Mammary epithelial cell (primary cell): ENCODE measurements at regions of chr5 and their contacts with region 1.

Region 1: GRCh38 chr5:137320056-137321045 is 178.8 kb downstream of the SPOCK1 start:
- DNase-seq: peak; percentile 66
- H3K4me3 ChIP-seq: no peak overlapping the region
- H3K27ac ChIP-seq: no peak overlapping the region
- H3K4me1 ChIP-seq: peaks cover 6% of the 10 kb centered on the region
- H3K27me3 ChIP-seq: no peaks in the 10 kb centered on the region
- CTCF ChIP-seq: peak; percentile 84 to 85

Region 2: DNA sequence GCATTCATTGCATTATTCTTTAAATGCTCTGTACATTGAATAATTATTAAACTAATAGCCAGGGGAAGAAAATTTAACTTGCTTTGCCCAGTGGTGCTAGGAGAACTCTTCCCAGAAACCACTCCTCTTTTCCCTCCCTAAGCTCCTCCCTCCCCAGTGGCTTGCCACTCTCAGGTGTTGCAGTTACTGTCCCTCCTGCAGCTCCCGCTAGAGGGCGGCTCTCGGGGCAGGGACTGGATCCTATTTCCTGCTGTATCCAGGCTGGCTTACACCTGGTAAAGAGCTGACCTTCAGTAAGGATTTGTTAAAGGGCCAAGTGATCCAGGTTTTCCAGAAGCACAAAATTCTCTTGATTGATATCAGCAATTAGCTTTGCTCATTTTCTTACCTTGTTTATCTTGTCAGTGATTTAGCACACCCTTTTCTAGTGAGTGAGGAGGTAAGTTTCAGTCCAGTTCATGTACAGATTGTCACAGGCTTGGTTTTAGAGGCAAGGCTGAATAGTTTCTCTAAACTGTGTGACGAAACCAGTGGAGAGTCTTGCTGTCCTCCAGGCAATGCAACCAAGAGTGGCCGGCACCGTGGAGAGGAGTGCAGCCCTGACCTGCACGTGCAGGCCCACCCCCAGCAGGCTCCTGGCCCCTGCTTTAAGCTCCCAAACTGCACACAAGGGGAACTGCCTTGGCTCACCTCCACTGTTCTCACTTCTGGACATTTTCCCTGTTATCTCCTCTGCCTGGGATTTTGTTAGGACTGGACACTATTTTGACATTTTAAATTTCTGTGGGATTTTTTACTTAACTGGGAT is 245.0 kb before region 1 on chr5:
- CTCF ChIA-PET with region 1: interaction called, 8 read pairs
- dilution Hi-C with region 1: no loop called
- in situ Hi-C with region 1: no loop called
- intact Hi-C with region 1: loop called (anchors 1 kb)
- DNase-seq: peak; percentile 78
- H3K4me3 ChIP-seq: no peak overlapping the region
- H3K27ac ChIP-seq: peak overlapping the region; percentile 22
- H3K4me1 ChIP-seq: peaks cover 21% of the 10 kb centered on the region
- H3K27me3 ChIP-seq: no peaks in the 10 kb centered on the region
- CTCF ChIP-seq: peak; percentile 94

Region 3: GRCh38 chr5:137220523-137220927 is 99.8 kb before region 1 on chr5:
- CTCF ChIA-PET with region 1: no interaction called
- dilution Hi-C with region 1: no loop called
- in situ Hi-C with region 1: no loop called
- intact Hi-C with region 1: loop called (anchors 1 kb)
- DNase-seq: peak; percentile 96
- H3K4me3 ChIP-seq: no peak overlapping the region
- H3K27ac ChIP-seq: no peak overlapping the region
- H3K4me1 ChIP-seq: peaks cover 35% of the 10 kb centered on the region
- H3K27me3 ChIP-seq: no peaks in the 10 kb centered on the region
- CTCF ChIP-seq: peak; percentile 82 to 83

Region 4: DNA sequence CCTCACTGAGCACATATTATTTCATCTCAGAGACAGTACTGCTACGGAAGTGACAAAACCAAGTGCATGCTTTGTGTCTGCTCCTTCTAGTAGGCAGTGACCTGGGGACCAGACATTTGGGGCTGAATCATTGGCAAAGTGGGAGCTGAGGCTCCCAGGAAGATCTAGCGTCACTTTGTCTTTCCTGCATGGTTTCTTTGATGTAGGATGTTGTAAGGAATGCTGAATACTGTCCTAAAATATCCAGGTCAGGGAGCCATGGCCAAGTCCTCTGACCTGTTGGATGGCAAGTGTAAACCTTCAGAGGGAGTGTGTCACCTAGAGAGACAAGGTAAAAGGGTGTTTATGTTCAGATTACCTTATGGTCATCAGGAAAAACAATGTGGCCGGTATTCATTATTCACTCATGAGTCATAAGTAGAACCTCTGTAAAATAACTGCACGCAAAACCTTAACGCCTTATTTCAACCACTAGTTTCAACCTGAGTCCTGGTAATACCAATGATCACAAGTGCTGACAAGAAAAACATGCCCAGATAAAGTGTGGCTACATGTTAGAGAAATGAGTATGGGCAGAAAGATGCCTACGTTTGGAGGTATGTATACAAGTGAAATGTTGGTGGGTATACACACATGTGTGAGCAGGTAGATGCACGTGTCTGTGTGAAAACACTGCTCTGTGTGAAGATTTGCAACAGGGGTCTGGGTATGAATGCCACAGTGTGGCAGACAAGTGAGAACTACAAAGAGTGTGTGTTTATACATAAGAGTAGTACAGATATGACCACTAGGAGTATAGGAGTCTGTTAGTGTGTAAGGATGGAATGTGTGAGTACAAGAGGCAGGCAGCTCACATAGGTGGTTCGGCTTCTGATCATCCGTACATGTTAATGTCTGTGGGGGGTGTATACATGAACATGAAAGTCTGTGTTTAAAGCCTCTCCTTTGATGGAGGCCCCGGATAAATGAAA is 85.1 kb before region 1 on chr5:
- CTCF ChIA-PET with region 1: no interaction called
- dilution Hi-C with region 1: no loop called
- in situ Hi-C with region 1: no loop called
- intact Hi-C with region 1: no loop called
- DNase-seq: peak; percentile 98
- H3K4me3 ChIP-seq: no peak overlapping the region
- H3K27ac ChIP-seq: peak overlapping the region; percentile 89
- H3K4me1 ChIP-seq: peaks cover 39% of the 10 kb centered on the region
- H3K27me3 ChIP-seq: no peaks in the 10 kb centered on the region
- CTCF ChIP-seq: peak; percentile 15 to 21

Region 5: GRCh38 chr5:137389042-137389441 is 68.7 kb after region 1 on chr5:
- CTCF ChIA-PET with region 1: no interaction called
- dilution Hi-C with region 1: no loop called
- in situ Hi-C with region 1: no loop called
- intact Hi-C with region 1: no loop called
- DNase-seq: no peak
- H3K4me3 ChIP-seq: no peak overlapping the region
- H3K27ac ChIP-seq: no peak overlapping the region
- H3K4me1 ChIP-seq: peaks cover 16% of the 10 kb centered on the region
- H3K27me3 ChIP-seq: no peaks in the 10 kb centered on the region
- CTCF ChIP-seq: no peak

Region 6: GRCh38 chr5:137498736-137499505 is 178.6 kb after region 1 on chr5 and contains the start of gene SPOCK1:
- CTCF ChIA-PET with region 1: interaction called, 13 read pairs
- dilution Hi-C with region 1: loop called (anchors 10 kb)
- in situ Hi-C with region 1: loop called (anchors 10 kb)
- intact Hi-C with region 1: loop called (anchors 1 kb)
- DNase-seq: peak; percentile 57
- H3K4me3 ChIP-seq: peak within 1 kb of the TSS; percentile 48 to 58 (median 53)
- H3K27ac ChIP-seq: no peak within 1 kb of the TSS
- H3K4me1 ChIP-seq: peaks cover 10% of the 10 kb centered on the region
- H3K27me3 ChIP-seq: peaks cover 4% of the 10 kb centered on the region
- CTCF ChIP-seq: peak; percentile 54 to 58
- total RNA-seq, gene SPOCK1: 13.3 to 14.9 TPM

Region 7: GRCh38 chr5:137735555-137736284 is 415.4 kb after region 1 on chr5 and contains the start of gene KLHL3:
- CTCF ChIA-PET with region 1: no interaction called
- dilution Hi-C with region 1: no loop called
- in situ Hi-C with region 1: no loop called
- intact Hi-C with region 1: loop called (anchors 5 kb)
- DNase-seq: peak; percentile 63
- H3K4me3 ChIP-seq: peak within 1 kb of the TSS; percentile 23 to 52 (median 42)
- H3K27ac ChIP-seq: peak within 1 kb of the TSS; percentile 18
- H3K4me1 ChIP-seq: peaks cover 18% of the 10 kb centered on the region
- H3K27me3 ChIP-seq: no peaks in the 10 kb centered on the region
- CTCF ChIP-seq: peak in 1 of 2 donors; percentile 45
- total RNA-seq, gene KLHL3: 3.3 to 4.9 TPM

Region 8: GRCh38 chr5:137933491-137933911 is 613.1 kb after region 1 on chr5:
- CTCF ChIA-PET with region 1: no interaction called
- dilution Hi-C with region 1: no loop called
- in situ Hi-C with region 1: no loop called
- intact Hi-C with region 1: no loop called
- DNase-seq: no peak
- H3K4me3 ChIP-seq: no peak overlapping the region
- H3K27ac ChIP-seq: no peak overlapping the region
- H3K4me1 ChIP-seq: no peaks in the 10 kb centered on the region
- H3K27me3 ChIP-seq: no peaks in the 10 kb centered on the region
- CTCF ChIP-seq: no peak